Heart right ventricle (tissue), 16 donors: ENCODE measurements at regions of chr15 and their contacts with region 1.

Region 1: DNA sequence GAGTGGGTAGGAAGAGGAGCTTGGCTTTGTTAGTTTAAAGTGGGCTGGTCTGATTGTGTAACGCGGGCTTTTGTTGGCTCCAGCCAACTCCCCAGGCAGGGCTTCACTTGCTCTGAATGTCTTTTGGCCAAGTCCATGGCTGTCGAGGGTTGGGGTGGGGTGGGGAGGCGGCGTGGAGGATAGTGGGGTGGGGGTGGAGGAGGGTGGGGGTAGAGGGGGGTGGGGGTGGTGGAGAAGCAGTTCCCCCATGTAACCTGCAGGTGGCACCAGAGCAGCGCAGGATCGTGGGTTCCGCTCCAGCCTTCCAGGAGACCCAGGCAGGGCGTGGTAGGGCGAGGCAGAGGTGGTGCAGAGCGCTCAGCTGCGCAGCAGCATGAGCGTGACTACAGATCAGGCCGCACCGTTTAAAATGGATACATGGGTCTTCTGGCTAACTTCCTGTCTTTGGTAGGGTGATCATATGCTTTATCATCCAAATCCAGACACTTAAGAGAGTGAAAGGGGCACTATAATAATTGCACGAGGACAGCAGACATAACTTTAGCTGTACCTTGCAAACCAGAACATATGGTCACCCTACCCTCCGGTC is 28.3 kb downstream of the GOLGA6A start:
- DNase-seq: peak; percentile 58 to 76
- ATAC-seq: peak; percentile 68 to 86 (median 72)
- H3K4me3 ChIP-seq: peak overlapping the region in 2 of 10 donors; percentile 12 to 16
- H3K27ac ChIP-seq: peak overlapping the region in 3 of 10 donors; percentile 35 to 52 (median 35)
- H3K4me1 ChIP-seq: peaks cover 5 to 42% (median 22%) of the 10 kb centered on the region in 9 donors
- H3K27me3 ChIP-seq: no peaks in the 10 kb centered on the region
- CTCF ChIP-seq: peak; percentile 31 to 69 (median 60)

Region 2: GRCh38 chr15:72312605-72313447 is 1741.2 kb before region 1 on chr15:
- intact Hi-C with region 1: loop called in 1 of 10 experiments (anchors 10 kb)
- DNase-seq: peak; percentile 54 to 56
- ATAC-seq: peak; percentile 75 to 92 (median 86)
- H3K4me3 ChIP-seq: no peak overlapping the region
- H3K27ac ChIP-seq: no peak overlapping the region
- H3K4me1 ChIP-seq: no peaks in the 10 kb centered on the region
- H3K27me3 ChIP-seq: no peaks in the 10 kb centered on the region
- CTCF ChIP-seq: peak; percentile 44 to 80 (median 67)

Region 3: GRCh38 chr15:72616491-72617210 is 1437.4 kb before region 1 on chr15:
- intact Hi-C with region 1: loop called in 1 of 10 experiments (anchors 10 kb)
- DNase-seq: no peak
- ATAC-seq: no peak
- H3K4me3 ChIP-seq: no peak overlapping the region
- H3K27ac ChIP-seq: no peak overlapping the region
- H3K4me1 ChIP-seq: peaks cover 0 to 10% (median 0%) of the 10 kb centered on the region in 9 donors
- H3K27me3 ChIP-seq: no peaks in the 10 kb centered on the region
- CTCF ChIP-seq: no peak

Region 4: GRCh38 chr15:74322181-74323076 is 268.4 kb after region 1 on chr15:
- intact Hi-C with region 1: loop called in 4 of 10 experiments (anchors 5 kb)
- DNase-seq: peak; percentile 62 to 71
- ATAC-seq: peak in 7 of 8 donors; percentile 17 to 64 (median 54)
- H3K4me3 ChIP-seq: no peak overlapping the region
- H3K27ac ChIP-seq: no peak overlapping the region
- H3K4me1 ChIP-seq: peaks cover 16 to 33% (median 30%) of the 10 kb centered on the region in 9 donors
- H3K27me3 ChIP-seq: peaks cover 0 to 4% (median 0%) of the 10 kb centered on the region in 7 donors
- CTCF ChIP-seq: peak; percentile 80 to 94 (median 87)